Adrenal gland (tissue), 19 donors: ENCODE measurements at regions of chr1 and their contacts with region 1.

Region 1: GRCh38 chr1:51341876-51342496 is 11.6 kb upstream of the TTC39A start:
- DNase-seq: peak in 2 of 7 donors; percentile 16 to 31
- H3K4me3 ChIP-seq: no peak overlapping the region
- H3K27ac ChIP-seq: no peak overlapping the region
- H3K4me1 ChIP-seq: peaks cover 4 to 7% of the 10 kb centered on the region in 2 donors
- H3K27me3 ChIP-seq: no peaks in the 10 kb centered on the region
- CTCF ChIP-seq: no peak
- POLR2A ChIP-seq: no peak

Region 2: GRCh38 chr1:51247022-51247421 is 95.0 kb before region 1 on chr1:
- intact Hi-C with region 1: no loop called
- DNase-seq: no peak
- H3K4me3 ChIP-seq: no peak overlapping the region
- H3K27ac ChIP-seq: peak overlapping the region in 1 of 5 donors; percentile 16
- H3K4me1 ChIP-seq: peaks cover 0 to 24% of the 10 kb centered on the region in 2 donors
- H3K27me3 ChIP-seq: no peaks in the 10 kb centered on the region
- CTCF ChIP-seq: no peak
- POLR2A ChIP-seq: no peak

Region 3: GRCh38 chr1:51535006-51535592 is 193.1 kb after region 1 on chr1:
- intact Hi-C with region 1: loop called in 1 of 2 experiments (anchors 10 kb)
- DNase-seq: peak; percentile 69 to 89 (median 73)
- H3K4me3 ChIP-seq: no peak overlapping the region
- H3K27ac ChIP-seq: peak overlapping the region in 2 of 5 donors; percentile 67 to 82
- H3K4me1 ChIP-seq: peaks cover 11 to 13% of the 10 kb centered on the region in 2 donors
- H3K27me3 ChIP-seq: no peaks in the 10 kb centered on the region
- CTCF ChIP-seq: peak; percentile 70 to 88 (median 86)
- POLR2A ChIP-seq: no peak